A673 (cell line): ENCODE measurements at regions of chr16 and their contacts with region 1.

Region 1: DNA sequence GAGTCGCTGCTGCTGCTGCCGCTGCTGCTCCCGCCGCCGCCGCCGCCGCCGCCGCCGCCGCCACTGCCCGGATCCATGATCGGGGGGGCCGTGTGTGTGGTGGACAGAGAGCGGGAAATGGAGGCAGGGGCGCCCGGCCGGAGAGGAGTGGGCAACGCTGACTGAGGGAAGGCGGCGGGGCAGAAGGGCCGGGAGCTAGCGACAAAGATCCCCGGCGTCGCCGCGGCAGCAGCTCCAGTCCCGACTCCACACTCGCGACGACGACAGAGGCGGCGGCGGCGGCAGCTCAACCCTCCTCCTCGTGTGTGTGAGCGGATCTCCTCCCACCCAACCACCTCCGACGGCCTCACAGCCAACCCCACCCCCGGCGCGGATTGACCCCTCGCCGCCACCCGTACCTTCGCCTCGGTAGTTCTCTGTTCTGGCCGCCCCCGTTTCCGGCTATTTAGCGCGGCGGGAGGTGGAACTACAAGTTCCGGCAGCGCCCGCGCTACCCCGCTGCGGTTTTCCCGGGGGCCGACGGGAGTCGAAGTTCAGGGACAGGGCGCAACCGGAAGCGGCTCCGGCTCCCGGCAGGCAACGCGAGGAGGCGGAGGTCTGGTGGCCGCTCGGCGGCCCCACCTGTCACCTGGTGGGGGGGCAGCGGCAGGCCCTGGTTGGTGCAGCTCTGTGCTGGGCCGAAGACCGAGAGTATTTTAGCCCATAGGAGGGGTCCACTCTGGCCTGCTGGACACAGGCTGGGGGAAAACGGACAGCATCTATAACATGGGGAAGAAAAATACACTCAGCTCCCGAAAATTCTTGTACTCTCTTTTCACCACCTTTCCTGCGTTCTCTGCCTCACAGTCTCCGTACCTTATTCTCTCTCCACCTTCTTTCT is at the start of gene GSPT1:
- DNase-seq: peak; percentile 99
- H3K4me3 ChIP-seq: peak within 1 kb of the TSS; percentile 96
- H3K27ac ChIP-seq: peak within 1 kb of the TSS; percentile 88
- H3K4me1 ChIP-seq: peaks cover 15% of the 10 kb centered on the region
- H3K27me3 ChIP-seq: no peaks in the 10 kb centered on the region
- CTCF ChIP-seq: no peak
- total RNA-seq, gene GSPT1: 198 and 216 TPM in 2 replicates

Region 2: DNA sequence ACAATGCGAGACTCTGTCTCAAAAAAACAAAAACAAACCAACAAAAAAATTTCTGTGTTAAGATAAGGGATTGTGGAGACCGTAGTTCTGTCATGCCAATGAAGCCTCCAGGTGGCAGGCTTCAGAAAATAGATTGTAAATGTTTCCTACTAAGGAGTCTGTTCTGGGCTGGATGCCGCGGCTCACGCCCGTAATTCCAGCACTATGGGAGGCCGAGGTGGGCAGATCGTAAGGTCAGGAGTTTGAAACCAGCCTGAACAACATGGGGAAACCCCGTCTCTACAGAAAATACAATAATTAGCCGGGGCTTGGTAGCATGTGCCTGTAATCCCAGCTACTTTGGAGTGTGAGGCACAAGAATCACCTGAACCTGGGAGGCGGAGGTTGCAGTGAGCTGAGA is 56.2 kb after region 1 on chr16:
- CTCF ChIA-PET with region 1: no interaction called
- POLR2A ChIA-PET with region 1: interaction called, 12 read pairs
- intact Hi-C with region 1: loop called (anchors 2 kb)
- DNase-seq: peak; percentile 32
- H3K4me3 ChIP-seq: no peak overlapping the region
- H3K27ac ChIP-seq: no peak overlapping the region
- H3K4me1 ChIP-seq: no peaks in the 10 kb centered on the region
- H3K27me3 ChIP-seq: peaks cover 7% of the 10 kb centered on the region
- CTCF ChIP-seq: peak; percentile 38

Region 3: DNA sequence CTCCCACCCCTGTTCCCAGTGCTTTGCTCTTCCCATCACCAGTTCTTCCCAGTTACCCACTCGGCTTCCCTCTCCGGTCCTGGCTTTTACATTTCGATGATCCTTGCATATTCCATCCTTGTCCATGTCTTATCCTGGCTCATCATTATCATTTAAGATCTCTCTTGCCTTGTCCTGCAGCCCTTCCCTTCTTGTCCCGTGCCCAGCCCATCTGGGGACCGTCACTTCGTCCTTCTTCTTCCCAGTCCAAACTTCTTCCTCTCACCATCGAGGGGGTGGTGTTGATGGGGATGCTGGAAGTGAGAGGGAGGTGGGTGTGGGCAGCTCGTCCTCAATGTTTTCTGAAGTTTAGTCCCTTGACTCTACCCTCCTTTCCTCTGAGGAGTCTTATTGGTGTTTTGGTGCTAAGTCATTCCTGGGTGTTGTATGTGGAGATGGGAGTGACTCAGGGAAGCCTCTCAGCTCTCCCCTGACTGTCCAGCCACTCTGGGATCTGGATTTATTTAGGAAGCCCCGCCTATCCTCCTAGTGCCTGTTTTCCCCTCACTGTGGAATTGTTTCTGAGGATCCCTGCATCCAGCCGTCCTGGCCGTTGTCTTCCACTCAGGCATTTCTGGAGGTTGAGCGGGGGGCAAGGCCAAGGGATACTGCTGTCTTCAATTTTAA is 61.6 kb after region 1 on chr16:
- CTCF ChIA-PET with region 1: no interaction called
- POLR2A ChIA-PET with region 1: no interaction called
- intact Hi-C with region 1: loop called (anchors 2 kb)
- DNase-seq: peak; percentile 26
- H3K4me3 ChIP-seq: peak overlapping the region; percentile 85
- H3K27ac ChIP-seq: peak overlapping the region; percentile 66
- H3K4me1 ChIP-seq: no peaks in the 10 kb centered on the region
- H3K27me3 ChIP-seq: no peaks in the 10 kb centered on the region
- CTCF ChIP-seq: no peak